ENCODE measurements at regions of chr7 and their contacts with region 1.

Region 1: DNA sequence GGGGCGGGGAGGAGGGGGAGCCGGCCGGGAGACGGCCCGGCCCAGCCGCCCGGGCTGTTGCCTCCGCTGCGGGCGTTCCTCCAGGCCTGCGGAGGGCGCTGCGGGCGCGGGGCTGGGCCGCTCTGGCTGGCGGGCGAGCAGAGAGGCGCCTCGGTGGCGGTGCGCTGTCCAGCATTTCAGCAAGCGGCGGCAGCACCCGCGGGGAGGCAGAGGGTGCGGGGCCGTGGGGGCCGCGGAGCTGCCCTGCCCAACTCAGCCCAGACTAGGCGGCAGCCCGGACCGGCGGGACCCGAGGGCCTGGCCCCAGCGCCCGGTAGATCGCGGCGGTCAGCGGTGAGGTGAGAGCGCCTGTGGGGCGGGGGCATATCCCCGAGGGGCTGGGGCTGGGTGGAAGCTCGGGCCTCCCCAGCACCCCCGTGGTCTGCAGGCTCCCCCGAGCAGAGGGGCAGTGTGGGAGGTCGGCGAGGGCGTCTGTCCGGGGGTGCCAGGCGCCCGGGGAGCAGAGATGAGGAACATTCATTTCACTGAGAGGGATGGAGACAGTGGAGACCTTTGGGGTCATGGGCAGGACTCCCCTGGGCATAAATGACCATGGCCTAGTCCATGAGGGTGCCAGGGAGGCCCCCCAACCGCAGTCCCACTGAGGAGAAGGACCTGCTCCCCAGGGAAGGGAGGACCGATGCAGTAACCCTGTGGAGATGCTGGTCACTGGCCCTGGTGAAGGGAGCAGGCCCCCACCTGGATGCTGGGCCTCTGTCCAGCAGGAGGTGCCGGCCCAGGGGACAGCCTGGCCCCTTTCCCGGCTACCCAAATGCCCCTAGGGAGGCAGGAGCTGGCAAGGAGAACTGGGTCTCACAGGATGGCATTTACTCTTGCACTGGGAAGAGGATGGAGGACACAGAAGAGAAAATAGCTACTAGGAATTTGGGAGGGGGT is at the start of gene SRRM3:
- DNase-seq: peak; percentile 79 to 91 (median 91)
- H3K4me3 ChIP-seq: peak within 1 kb of the TSS in 5 of 7 experiments; percentile 15 to 50 (median 20)
- H3K27ac ChIP-seq: no peak within 1 kb of the TSS
- H3K4me1 ChIP-seq: peaks cover 0 to 9% (median 3%) of the 10 kb centered on the region in 4 experiments
- H3K27me3 ChIP-seq: peaks cover 0 to 29% (median 4%) of the 10 kb centered on the region in 5 experiments

Region 2: DNA sequence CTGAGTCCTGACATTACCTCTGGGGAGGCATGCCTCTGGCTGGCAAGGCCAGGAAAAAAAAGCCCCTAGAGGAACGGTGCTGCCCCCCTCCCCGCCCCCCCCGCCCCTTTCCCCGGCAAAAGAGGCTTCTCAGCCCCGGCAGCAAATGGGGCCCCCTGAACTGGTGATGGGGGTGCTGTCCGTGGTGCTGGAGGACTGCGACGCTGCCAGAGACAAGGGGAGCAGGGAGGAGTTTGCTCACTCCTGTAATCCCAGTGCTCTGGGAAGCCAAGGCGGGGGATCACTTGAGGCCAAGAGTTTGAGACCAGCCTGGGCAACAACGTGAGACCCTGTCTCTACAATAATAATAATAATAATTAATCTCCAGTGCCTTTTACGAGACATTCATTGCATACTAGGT is 23.4 kb after region 1 on chr7:
- CTCF ChIA-PET with region 1: interaction called, 10 read pairs
- POLR2A ChIA-PET with region 1: no interaction called
- DNase-seq: peak; percentile 27 to 70 (median 69)
- H3K4me3 ChIP-seq: no peak overlapping the region
- H3K27ac ChIP-seq: no peak overlapping the region
- H3K4me1 ChIP-seq: no peaks in the 10 kb centered on the region
- H3K27me3 ChIP-seq: peaks cover 0 to 39% (median 8%) of the 10 kb centered on the region in 5 experiments

Region 3: GRCh38 chr7:76302347-76303201 is 100.6 kb after region 1 on chr7 and contains the start of gene HSPB1:
- CTCF ChIA-PET with region 1: no interaction called
- POLR2A ChIA-PET with region 1: no interaction called
- DNase-seq: peak; percentile 84 to 92 (median 90)
- H3K4me3 ChIP-seq: peak within 1 kb of the TSS; percentile 69 to 91 (median 74)
- H3K27ac ChIP-seq: peak within 1 kb of the TSS in 1 of 2 experiments; percentile 79
- H3K4me1 ChIP-seq: peaks cover 0 to 27% (median 20%) of the 10 kb centered on the region in 4 experiments
- H3K27me3 ChIP-seq: no peaks in the 10 kb centered on the region

Measured in common myeloid progenitor, CD34-positive (primary cell).